ENCODE measurements at regions of chr2 and their contacts with region 1.

Region 1: DNA sequence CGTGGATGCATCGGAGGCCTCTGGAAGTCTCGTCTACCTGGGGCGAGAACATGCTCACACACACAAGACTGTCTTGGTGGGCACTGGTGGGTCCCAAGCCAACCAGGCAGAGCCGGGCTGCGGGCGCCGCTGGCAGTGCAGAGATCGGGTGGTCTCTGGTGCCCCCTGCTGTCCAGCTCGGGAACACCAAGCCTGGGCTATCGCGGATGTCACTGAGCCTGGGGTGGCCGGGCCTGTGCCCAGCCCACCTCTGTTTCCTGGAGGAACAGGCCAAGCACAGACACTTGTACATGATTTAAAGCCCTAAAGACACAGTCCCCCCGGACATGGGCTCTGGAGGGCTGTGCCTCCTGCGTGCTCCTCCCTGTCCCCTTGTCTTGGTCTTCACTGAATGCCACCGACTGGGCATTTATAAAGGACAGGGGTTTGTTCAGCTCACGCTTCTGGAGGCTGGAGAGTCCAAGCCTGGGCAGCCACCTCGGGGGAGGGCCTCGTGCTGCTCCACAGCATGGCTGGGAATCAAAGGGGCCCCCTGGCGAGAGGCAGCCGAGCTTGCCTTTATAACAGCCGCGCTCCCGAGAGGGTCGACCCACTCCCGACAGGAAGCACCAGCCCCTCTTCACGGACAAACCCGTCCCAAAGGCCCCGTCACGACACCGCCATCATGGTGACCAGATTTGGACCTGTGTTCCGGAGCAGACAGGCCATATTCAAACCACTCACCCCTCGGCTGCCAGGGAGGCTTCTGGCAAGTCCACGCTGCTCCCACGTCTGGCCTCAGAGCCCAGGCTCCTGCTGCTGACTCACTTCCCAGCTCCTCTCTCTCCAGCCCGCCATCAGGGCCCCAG is 3.6 kb upstream of the OTOS start:
- DNase-seq: peak; percentile 69 to 89 (median 82)
- H3K4me3 ChIP-seq: peak overlapping the region in 31 of 59 donors; percentile 1 to 51 (median 31)
- H3K27ac ChIP-seq: peak overlapping the region in 3 of 59 donors; percentile 1 to 56 (median 25)
- H3K27me3 ChIP-seq: no peaks in the 10 kb centered on the region
- CTCF ChIP-seq: peak; percentile 84 to 100 (median 97)

Region 2: GRCh38 chr2:238358769-238359168 is 1785.3 kb before region 1 on chr2:
- intact Hi-C with region 1: loop called in 1 of 2 experiments (anchors 5 kb)
- DNase-seq: no peak
- H3K4me3 ChIP-seq: no peak overlapping the region
- H3K27ac ChIP-seq: peak overlapping the region in 51 of 59 donors; percentile 3 to 78 (median 49)
- H3K27me3 ChIP-seq: no peaks in the 10 kb centered on the region
- CTCF ChIP-seq: no peak

Region 3: GRCh38 chr2:239035361-239036078 is 1108.5 kb before region 1 on chr2:
- intact Hi-C with region 1: loop called in 1 of 2 experiments (anchors 5 kb)
- DNase-seq: peak; percentile 47 to 82 (median 64)
- H3K4me3 ChIP-seq: peak overlapping the region in 2 of 59 donors; percentile 18
- H3K27ac ChIP-seq: peak overlapping the region in 3 of 59 donors; percentile 44 to 57 (median 46)
- H3K27me3 ChIP-seq: no peaks in the 10 kb centered on the region
- CTCF ChIP-seq: peak; percentile 61 to 99 (median 93)

Region 4: GRCh38 chr2:240060977-240061591 is 82.9 kb before region 1 on chr2:
- intact Hi-C with region 1: loop called (anchors 1 to 2 kb)
- DNase-seq: peak in 1 of 10 donors; percentile 58
- H3K4me3 ChIP-seq: peak overlapping the region in 2 of 59 donors; percentile 12 to 15
- H3K27ac ChIP-seq: peak overlapping the region in 35 of 59 donors; percentile 8 to 82 (median 54)
- H3K27me3 ChIP-seq: peaks cover 0 to 9% (median 0%) of the 10 kb centered on the region in 45 donors
- CTCF ChIP-seq: peak; percentile 47 to 92 (median 71)

Region 5: DNA sequence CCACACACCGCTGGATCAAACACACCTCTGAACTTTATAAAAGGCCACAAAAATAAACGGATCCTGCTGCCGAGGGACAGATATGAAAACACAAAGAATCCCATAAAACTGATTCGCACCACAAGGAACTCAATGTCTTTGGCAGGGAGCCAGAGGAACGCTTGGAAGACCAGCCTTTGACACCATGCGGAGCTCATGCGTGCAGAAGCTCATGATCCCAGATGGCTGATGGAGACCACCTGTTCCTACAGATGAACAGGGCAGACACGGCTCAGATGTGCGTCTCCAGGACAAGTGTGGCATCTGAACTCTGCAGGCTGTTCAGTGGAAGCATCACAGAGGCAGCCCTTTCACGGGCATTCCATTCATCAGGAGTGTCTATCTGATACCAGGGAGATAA is 32.8 kb before region 1 on chr2:
- intact Hi-C with region 1: no loop called
- DNase-seq: no peak
- H3K4me3 ChIP-seq: no peak overlapping the region
- H3K27ac ChIP-seq: no peak overlapping the region
- H3K27me3 ChIP-seq: peaks cover 0 to 10% (median 0%) of the 10 kb centered on the region in 45 donors
- CTCF ChIP-seq: no peak

Measured in dorsolateral prefrontal cortex (tissue), 120 donors.